ENCODE measurements at regions of chr17 and their contacts with region 1.

Region 1: DNA sequence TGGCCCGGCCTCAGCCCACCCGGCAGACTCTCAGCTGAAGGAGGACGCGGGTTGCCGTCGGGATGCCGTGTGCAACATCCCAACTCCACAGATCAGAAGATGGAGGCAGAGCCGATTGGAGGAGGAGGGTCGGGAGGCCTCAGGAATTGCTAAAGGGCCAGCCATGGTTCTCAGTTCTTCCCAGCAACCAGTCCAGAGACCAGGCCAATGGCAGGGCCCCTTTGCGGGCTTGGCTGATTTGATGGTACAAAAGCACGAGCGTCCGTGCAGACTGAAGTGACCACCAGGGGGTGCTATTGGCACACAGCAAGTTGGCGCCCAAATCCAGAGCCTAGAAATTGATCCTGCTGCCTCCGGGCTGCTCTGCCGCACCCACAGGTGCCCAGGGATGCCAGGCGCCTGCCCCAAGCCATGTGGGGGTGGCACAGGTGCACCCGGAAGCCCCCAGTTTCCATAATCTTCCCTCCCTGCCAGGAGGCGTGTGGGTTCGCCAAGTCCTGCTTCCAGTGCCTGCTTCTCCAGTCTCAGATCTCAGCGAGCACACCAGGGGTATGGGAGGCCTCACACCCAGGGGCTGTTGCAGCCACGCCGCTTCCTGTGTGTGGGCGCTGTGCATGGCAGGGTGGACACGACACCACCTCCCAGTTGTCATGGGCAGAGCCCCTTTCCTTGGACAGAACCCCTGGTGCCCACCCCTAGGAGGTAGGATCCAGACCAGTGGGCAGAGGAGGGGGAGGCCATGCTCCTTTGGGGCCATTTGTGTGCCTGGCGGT is 7.1 kb upstream of the TEX19 start:
- DNase-seq: peak; percentile 76 to 86
- ATAC-seq: peak; percentile 76 to 90 (median 84)
- H3K4me3 ChIP-seq: no peak overlapping the region
- H3K27ac ChIP-seq: no peak overlapping the region
- H3K4me1 ChIP-seq: peaks cover 0 to 22% (median 13%) of the 10 kb centered on the region in 9 donors
- H3K27me3 ChIP-seq: peaks cover 0 to 26% (median 12%) of the 10 kb centered on the region in 7 donors
- CTCF ChIP-seq: peak; percentile 95 to 99 (median 97)

Region 2: GRCh38 chr17:81676906-81677305 is 675.0 kb before region 1 on chr17:
- intact Hi-C with region 1: no loop called
- DNase-seq: no peak
- ATAC-seq: peak in 2 of 8 donors; percentile 6 to 10
- H3K4me3 ChIP-seq: no peak overlapping the region
- H3K27ac ChIP-seq: no peak overlapping the region
- H3K4me1 ChIP-seq: peaks cover 0 to 21% (median 7%) of the 10 kb centered on the region in 9 donors
- H3K27me3 ChIP-seq: no peaks in the 10 kb centered on the region
- CTCF ChIP-seq: no peak

Region 3: GRCh38 chr17:82412535-82413520 is 60.9 kb after region 1 on chr17:
- intact Hi-C with region 1: loop called (anchors 1 to 5 kb)
- DNase-seq: no peak
- ATAC-seq: peak in 2 of 8 donors; percentile 23 to 39
- H3K4me3 ChIP-seq: no peak overlapping the region
- H3K27ac ChIP-seq: no peak overlapping the region
- H3K4me1 ChIP-seq: peaks cover 2 to 24% (median 10%) of the 10 kb centered on the region in 9 donors
- H3K27me3 ChIP-seq: no peaks in the 10 kb centered on the region
- CTCF ChIP-seq: no peak

Region 4: DNA sequence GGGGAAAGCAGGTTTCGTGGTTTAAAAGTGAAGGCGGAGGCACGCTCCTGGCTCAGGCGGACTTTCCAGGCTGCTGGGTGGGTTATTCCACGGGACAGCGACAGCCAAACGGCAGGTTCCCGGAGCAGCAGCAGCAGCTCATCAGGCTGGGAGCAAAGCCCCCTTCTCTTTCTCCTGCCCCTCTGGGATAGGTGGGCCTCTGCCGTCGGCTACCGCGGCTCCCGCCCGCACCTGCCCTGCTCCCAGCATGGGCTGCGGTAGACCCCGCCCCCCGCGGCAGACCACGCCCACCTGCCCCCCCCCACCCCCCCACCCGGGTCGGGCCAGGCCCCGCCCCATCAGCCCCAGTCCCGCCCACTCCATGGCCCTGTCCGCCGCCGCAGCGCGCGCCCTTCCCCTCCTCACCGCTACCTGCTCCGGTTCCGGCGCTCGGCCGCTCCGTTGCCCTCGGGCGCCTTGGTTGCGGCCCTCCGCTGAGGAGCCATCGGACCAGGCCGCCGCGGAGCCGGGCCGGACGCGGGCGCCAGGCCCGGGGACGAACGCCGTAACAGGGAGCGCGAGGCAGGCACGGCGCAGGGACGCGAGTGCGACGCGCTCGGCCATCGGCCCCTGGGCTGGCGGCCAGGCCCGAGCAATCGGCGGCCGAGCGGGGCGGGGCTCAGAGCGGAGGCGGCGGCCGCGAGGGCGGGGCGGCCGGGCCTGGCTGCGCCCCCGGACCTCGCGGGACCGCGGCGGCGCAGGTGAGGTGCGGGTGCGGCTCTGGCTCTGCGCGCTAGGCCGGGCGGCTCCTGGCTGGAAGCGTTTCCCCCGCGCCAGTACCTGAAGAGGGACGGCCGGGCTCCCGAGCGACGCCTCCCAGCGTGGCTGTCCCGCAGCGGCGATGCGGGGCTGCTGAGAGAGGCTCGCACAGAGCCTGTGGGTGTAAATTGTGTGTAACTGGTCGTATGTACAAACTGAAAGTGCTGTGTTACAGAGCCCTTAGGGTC is 66.4 kb after region 1 on chr17 and contains the starts of genes HEXD and OGFOD3:
- intact Hi-C with region 1: loop called (anchors 1 to 5 kb)
- DNase-seq: peak; percentile 79 to 85
- ATAC-seq: peak; percentile 82 to 96 (median 94)
- H3K4me3 ChIP-seq: peak within 1 kb of the TSS; percentile 29 to 98 (median 79)
- H3K27ac ChIP-seq: peak within 1 kb of the TSS; percentile 68 to 96 (median 92)
- H3K4me1 ChIP-seq: peaks cover 3 to 30% (median 18%) of the 10 kb centered on the region in 9 donors
- H3K27me3 ChIP-seq: no peaks in the 10 kb centered on the region
- CTCF ChIP-seq: no peak
- total RNA-seq, gene HEXD: 9.4 to 22.2 (median 12.8) TPM
- total RNA-seq, gene OGFOD3: 23.3 to 39.4 (median 31.1) TPM

Region 5: GRCh38 chr17:82494236-82495055 is 142.5 kb after region 1 on chr17:
- intact Hi-C with region 1: loop called in 3 of 10 experiments (anchors 5 to 10 kb)
- DNase-seq: peak; percentile 86 to 92
- ATAC-seq: peak; percentile 82 to 92 (median 86)
- H3K4me3 ChIP-seq: peak overlapping the region in 4 of 10 donors; percentile 5 to 19 (median 14)
- H3K27ac ChIP-seq: peak overlapping the region in 7 of 10 donors; percentile 0 to 62 (median 39)
- H3K4me1 ChIP-seq: peaks cover 6 to 31% (median 15%) of the 10 kb centered on the region in 9 donors
- H3K27me3 ChIP-seq: no peaks in the 10 kb centered on the region
- CTCF ChIP-seq: peak; percentile 84 to 97 (median 92)

Region 6: DNA sequence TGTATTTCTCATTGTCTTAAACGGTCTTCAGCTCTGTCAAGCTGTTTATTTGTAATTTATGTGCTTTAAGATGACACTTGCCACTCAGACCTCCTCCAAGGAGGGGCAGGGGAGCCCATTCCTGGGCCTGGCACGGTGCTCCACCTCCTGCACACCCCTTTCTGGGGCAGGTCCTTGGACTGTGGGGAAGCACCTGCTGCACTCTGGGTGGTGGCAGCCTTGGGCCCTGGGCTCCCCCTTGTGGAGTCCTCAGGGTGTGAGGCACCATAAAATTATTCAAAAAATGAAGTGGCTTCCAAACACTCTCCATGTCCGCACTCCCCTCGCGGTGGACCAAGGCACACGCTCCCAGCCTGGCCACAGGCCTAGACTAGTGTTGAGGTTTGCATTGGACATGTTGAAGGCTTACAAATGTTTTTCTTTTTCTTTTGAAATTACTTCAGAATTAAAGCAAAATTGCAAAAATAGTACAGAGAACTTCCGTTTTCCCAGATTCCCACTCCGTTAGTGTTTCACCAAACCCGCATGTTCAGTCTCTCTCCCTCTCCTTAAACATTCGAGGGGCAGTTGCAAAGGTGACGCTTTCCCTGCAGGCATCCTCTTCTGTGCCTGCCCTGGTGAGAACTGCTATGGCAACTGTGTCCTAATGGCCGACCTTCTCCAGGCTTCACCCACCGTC is 200.0 kb after region 1 on chr17:
- intact Hi-C with region 1: loop called in 8 of 10 experiments (anchors 5 to 10 kb)
- DNase-seq: peak; percentile 65 to 70
- ATAC-seq: peak; percentile 68 to 85 (median 76)
- H3K4me3 ChIP-seq: no peak overlapping the region
- H3K27ac ChIP-seq: peak overlapping the region in 7 of 10 donors; percentile 24 to 76 (median 65)
- H3K4me1 ChIP-seq: peaks cover 17 to 76% (median 61%) of the 10 kb centered on the region in 9 donors
- H3K27me3 ChIP-seq: no peaks in the 10 kb centered on the region
- CTCF ChIP-seq: peak; percentile 59 to 82 (median 73)

Region 7: GRCh38 chr17:82767041-82767754 is 415.3 kb after region 1 on chr17:
- intact Hi-C with region 1: loop called in 5 of 10 experiments (anchors 10 kb)
- DNase-seq: peak in 1 of 2 donors; percentile 54
- ATAC-seq: peak in 7 of 8 donors; percentile 38 to 71 (median 56)
- H3K4me3 ChIP-seq: no peak overlapping the region
- H3K27ac ChIP-seq: no peak overlapping the region
- H3K4me1 ChIP-seq: peaks cover 0 to 3% (median 0%) of the 10 kb centered on the region in 9 donors
- H3K27me3 ChIP-seq: no peaks in the 10 kb centered on the region
- CTCF ChIP-seq: peak; percentile 29 to 65 (median 59)

Region 8: GRCh38 chr17:82775001-82775823 is 423.3 kb after region 1 on chr17:
- intact Hi-C with region 1: loop called in 7 of 10 experiments (anchors 5 to 10 kb)
- DNase-seq: peak; percentile 37 to 74
- ATAC-seq: peak; percentile 23 to 69 (median 54)
- H3K4me3 ChIP-seq: peak overlapping the region in 3 of 10 donors; percentile 12 to 29 (median 24)
- H3K27ac ChIP-seq: peak overlapping the region in 1 of 10 donors; percentile 10
- H3K4me1 ChIP-seq: peaks cover 0 to 13% (median 0%) of the 10 kb centered on the region in 9 donors
- H3K27me3 ChIP-seq: no peaks in the 10 kb centered on the region
- CTCF ChIP-seq: peak; percentile 75 to 92 (median 89)